Prostate gland (tissue), 2 donors: ENCODE measurements at regions of chr12 and their contacts with region 1.

Region 1: DNA sequence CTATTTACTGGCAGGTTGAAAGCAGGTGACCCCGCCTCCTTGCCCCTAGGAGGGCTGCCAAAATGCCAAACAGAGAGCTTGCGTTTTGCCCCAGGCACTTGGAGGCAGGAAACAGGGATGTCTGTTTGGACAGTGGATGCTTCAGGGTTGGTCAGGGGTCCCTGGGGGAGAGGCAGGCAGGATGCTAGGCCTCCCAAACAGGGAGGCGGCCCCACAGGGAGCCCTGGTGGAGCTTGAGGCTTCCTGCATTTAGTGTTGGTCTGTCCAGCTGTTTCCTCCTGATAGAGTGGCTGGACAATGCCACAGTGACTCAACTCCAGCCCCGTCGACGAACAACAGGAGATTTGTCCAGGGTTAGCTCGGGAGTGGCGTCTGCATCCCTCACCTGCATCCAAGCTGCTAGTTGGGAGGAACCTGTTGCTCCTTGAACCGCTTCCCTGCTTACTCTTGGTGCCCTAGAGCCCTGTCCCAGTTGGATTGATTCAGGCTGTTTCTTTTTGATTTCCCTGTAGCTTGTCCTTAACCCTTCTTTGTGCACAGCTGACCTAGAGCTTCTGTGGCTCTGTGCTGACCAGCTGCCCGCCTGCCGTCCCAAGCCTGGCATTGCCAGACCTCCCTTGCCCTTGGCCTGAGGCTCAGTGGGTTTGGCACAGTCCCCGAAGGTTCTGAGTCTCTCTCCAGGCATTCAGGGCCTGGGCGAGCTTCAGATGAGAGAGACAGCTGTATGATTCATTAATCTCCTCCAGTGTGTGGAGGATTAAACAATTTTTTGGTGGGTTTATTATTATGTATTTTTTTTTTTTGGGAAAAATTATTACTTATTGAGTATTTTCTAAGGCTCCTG is 45.9 kb downstream of the TSPAN9 start:
- DNase-seq: no peak
- H3K4me3 ChIP-seq: no peak overlapping the region
- H3K27ac ChIP-seq: no peak overlapping the region
- H3K4me1 ChIP-seq: peaks cover 10% of the 10 kb centered on the region
- H3K27me3 ChIP-seq: no peaks in the 10 kb centered on the region
- CTCF ChIP-seq: no peak
- POLR2A ChIP-seq: no peak

Region 2: DNA sequence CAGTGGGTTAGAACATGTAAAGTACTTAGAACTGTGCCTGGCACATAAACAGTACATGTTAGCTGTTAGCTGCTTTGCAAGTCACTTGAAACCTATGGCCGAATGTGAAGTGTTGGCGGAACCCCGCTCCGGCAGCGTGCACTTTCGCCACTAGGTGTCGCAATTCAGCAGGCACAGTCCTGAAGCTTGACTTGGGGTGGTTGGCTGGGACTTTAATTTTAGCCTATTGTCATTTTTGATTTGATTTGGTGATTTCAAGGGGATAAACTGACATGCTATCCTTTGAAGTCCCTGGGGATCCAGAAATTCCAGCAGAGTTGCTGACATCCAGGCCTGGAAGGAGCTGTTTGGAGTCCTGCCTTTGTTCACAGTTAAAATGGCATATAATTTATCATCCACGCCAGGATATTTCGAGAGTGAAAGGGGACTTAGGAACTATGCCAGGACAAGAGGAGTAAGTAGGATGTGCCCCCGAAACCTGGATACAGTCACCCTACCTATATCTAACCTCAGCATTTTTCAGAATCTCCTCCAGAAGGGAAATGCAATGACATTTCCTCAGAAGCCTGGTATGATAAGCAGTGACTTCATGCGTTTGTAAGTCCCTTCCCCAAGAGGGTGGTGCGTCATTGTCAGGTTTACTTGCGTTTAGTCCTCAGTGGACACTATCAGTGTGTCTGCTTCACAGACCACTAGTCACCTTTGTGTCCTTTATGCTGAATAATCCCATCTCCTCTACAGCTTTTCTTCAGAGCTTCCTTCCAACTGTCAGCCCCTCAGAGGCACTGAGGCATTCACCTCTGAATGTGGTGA is 49.4 kb before region 1 on chr12:
- intact Hi-C with region 1: loop called (anchors 5 kb)
- DNase-seq: peak; percentile 84
- H3K4me3 ChIP-seq: no peak overlapping the region
- H3K27ac ChIP-seq: no peak overlapping the region
- H3K4me1 ChIP-seq: peaks cover 4% of the 10 kb centered on the region
- H3K27me3 ChIP-seq: no peaks in the 10 kb centered on the region
- CTCF ChIP-seq: peak; percentile 94 to 98 (median 96)
- POLR2A ChIP-seq: no peak